Prostate gland (tissue), 2 donors: ENCODE measurements at regions of chr10 and their contacts with region 1.

Region 1: DNA sequence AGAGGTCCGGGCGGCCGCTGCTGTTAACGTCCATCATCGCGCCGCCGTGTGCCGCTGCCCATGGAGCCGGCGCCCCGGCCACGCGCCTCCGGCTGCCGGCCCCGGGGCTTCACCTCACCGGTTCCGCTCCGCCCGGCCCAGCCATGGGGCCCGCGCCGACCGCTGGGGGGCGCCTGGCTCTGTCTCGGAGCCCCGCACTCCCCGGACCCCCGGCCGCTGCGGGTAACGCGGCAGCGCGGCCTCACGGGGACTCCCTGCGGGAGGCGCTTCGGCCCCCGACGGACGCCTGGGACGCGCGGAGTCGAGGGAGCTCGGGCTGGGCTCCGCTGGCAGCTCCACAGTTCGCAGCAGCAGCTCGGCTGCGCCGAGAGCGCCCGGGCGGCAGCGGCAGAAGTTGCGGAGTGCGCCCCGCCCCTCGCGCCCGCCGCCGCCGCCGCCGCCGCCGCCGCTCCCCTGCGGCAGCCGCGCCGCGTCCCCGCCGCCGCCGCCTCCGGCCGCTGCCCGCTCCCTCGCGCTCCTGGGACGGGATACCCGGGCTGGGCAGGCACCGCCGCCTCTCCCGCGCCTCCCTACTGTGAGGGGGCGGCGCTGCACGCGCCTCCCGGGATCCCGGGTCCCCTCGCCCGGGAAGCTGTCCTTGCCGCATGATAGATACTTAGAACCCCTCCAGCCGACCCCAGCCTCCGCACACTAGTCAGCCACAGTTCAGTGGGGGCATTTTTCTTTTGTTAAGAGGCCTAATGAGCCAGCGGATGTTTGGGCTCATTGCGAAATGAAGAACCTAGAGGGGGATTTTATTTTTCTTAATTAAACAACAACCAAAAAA is at the start of gene HTR7:
- DNase-seq: peak; percentile 31
- H3K4me3 ChIP-seq: peak within 1 kb of the TSS; percentile 42 to 46
- H3K27ac ChIP-seq: peak within 1 kb of the TSS in 1 of 2 donors; percentile 12
- H3K4me1 ChIP-seq: no peaks in the 10 kb centered on the region
- H3K27me3 ChIP-seq: no peaks in the 10 kb centered on the region
- CTCF ChIP-seq: peak; percentile 32 to 68 (median 44)
- POLR2A ChIP-seq: no peak
- total RNA-seq, gene HTR7: 0.77 to 3.5 TPM

Region 2: GRCh38 chr10:90751107-90751997 is 106.5 kb before region 1 on chr10:
- intact Hi-C with region 1: loop called (anchors 10 kb)
- DNase-seq: peak; percentile 14
- H3K4me3 ChIP-seq: no peak overlapping the region
- H3K27ac ChIP-seq: no peak overlapping the region
- H3K4me1 ChIP-seq: no peaks in the 10 kb centered on the region
- H3K27me3 ChIP-seq: no peaks in the 10 kb centered on the region
- CTCF ChIP-seq: peak; percentile 23 to 69 (median 64)
- POLR2A ChIP-seq: no peak